Activated CD4-positive, alpha-beta T cell treated with anti-CD3 and anti-CD28 coated beads for 36 hours (primary cell): ENCODE measurements at regions of chr9 and their contacts with region 1.

Region 1: DNA sequence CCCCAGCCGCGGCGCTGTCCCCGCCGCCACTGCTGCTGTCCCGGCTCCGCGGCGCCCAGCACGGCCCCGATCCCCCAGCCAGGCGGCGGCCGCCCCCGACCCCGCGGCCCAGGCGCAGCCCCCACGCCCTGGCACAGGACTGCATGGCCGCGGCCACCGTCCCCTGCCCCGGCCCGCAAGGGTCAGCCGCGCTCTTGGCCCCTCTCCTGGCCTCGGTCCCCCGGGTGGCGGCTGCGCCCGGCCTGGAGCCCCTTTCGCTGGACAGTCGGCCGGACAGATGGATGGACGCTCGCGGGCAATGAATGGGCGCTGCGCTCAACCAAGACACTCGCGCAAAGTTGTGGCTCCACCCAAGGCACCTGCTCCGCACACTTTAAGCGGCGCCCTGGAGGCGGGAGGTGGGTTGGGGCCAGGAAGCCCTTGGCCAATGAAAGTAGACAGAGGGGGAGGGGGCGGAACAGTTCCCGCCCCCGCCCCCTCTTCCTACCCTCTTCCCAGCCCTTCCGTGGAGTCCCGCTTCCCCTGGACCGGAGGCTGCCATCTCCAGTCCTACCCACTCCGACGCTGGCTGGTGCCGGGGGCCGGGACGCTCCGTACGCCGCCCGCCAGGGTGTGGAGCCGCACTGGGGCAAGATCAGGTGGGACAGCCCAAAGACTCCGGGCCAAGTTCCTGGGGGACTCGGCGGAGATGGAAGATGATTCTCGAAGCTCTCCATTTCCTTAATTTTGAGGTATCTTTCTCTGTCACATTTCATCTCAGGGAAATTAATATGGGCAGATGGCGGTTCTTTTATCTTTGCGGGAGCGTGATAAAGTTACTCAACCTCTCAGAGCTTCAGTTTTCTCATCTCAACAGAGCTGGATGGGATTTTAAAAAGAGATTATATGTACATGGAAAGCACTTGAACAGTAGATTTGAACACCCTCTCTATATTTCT is at the start of gene GLDC:
- DNase-seq: peak; percentile 68
- ATAC-seq: peak; percentile 70
- H3K4me3 Mint-ChIP-seq: peak within 1 kb of the TSS; percentile 71
- H3K27ac Mint-ChIP-seq: peak within 1 kb of the TSS; percentile 47
- H3K4me1 Mint-ChIP-seq: peaks cover 17% of the 10 kb centered on the region
- H3K27me3 Mint-ChIP-seq: peaks cover 57% of the 10 kb centered on the region
- total RNA-seq, gene GLDC: 0.95 to 1.8 TPM

Region 2: GRCh38 chr9:6598249-6598725 is 47.3 kb before region 1 on chr9:
- CTCF ChIA-PET with region 1: no interaction called
- POLR2A ChIA-PET with region 1: no interaction called
- intact Hi-C with region 1: loop called in 1 of 2 experiments (anchors 5 kb)
- DNase-seq: peak; percentile 66
- ATAC-seq: peak; percentile 95
- H3K4me3 Mint-ChIP-seq: no peak overlapping the region
- H3K27ac Mint-ChIP-seq: peak overlapping the region; percentile 80
- H3K4me1 Mint-ChIP-seq: peaks cover 10% of the 10 kb centered on the region
- H3K27me3 Mint-ChIP-seq: peaks cover 2% of the 10 kb centered on the region

Region 3: GRCh38 chr9:6667633-6668280 is 22.1 kb after region 1 on chr9:
- CTCF ChIA-PET with region 1: interaction called, 3 read pairs
- POLR2A ChIA-PET with region 1: no interaction called
- intact Hi-C with region 1: loop called in 1 of 2 experiments (anchors 2 kb)
- DNase-seq: no peak
- ATAC-seq: no peak
- H3K4me3 Mint-ChIP-seq: no peak overlapping the region
- H3K27ac Mint-ChIP-seq: no peak overlapping the region
- H3K4me1 Mint-ChIP-seq: no peaks in the 10 kb centered on the region
- H3K27me3 Mint-ChIP-seq: no peaks in the 10 kb centered on the region

Region 4: DNA sequence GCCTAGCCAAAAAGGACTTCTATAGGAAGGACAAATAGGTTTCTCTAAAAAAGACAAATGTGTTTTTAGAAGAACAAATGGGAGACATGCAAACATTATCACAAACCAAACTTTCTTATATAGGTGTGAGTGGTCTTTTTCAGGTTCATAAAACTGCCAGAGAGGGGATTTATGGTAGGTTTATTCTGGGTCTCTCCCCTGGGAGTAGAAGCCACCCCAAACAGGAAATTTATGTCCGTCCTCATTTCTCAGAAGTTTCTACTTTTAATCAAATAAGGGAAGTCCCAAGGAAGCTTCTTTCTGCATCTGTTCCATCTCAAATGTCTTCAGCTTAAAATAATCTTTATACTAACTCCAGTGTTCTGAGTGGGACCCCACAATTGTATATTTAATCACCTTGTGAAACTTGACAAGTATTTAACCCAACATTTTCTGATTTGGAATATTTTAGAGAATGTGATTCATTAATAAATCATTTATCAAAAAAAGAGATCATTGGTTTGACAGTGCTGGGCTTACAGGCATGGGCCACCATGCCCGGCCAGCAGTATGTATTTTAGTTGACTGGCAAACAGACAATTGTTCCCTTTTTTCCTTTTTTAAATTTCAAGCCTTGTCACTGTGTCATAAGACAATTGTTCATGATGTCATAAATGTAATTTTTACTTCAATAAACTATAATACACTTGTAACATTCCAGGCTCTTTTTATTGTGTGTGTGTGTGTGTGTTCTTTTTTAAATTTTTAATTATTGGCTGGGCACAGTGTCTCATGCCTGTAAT is 44.5 kb after region 1 on chr9:
- CTCF ChIA-PET with region 1: no interaction called
- POLR2A ChIA-PET with region 1: no interaction called
- intact Hi-C with region 1: no loop called
- DNase-seq: no peak
- ATAC-seq: no peak
- H3K4me3 Mint-ChIP-seq: no peak overlapping the region
- H3K27ac Mint-ChIP-seq: no peak overlapping the region
- H3K4me1 Mint-ChIP-seq: peaks cover 2% of the 10 kb centered on the region
- H3K27me3 Mint-ChIP-seq: no peaks in the 10 kb centered on the region